ENCODE measurements at regions of chr1 and their contacts with region 1.

Region 1: DNA sequence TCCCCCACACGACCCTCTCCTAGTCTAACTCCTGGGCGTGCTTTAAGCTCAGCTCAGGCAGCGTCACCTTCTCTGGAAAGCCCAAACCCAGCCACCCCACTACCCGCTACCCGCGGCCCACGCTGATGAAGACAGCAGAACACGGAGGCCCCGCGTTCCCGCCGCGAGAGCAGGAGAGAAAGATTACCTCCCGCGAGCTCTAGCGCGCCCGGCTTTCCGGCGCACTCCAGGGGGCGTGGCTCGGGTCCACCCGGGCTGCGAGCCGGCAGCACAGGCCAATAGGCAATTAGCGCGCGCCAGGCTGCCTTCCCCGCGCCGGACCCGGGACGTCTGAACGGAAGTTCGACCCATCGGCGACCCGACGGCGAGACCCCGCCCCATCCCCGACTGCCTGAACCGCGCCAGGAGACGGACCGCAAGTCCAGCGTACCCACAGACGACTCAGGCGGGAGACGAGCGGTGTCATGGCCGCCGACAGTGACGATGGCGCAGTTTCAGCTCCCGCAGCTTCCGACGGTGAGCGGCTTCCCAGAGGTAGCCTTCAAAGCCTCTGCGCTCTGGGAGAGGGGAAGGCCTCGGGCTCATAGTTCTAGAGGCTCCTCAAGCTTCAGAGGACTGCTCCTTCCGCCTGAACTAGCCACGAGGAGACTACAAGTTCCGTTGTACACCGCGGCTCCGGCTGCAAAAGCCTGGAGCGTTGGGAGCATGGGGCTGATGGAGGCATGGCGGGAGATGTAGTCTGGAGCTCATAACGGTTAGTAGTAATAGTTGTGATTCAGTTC is at the starts of genes MUTYH and TOE1:
- DNase-seq: peak; percentile 97
- H3K4me3 Mint-ChIP-seq: peak within 1 kb of the TSS; percentile 98
- H3K27ac Mint-ChIP-seq: peak within 1 kb of the TSS; percentile 99
- H3K4me1 Mint-ChIP-seq: peaks cover 54% of the 10 kb centered on the region
- H3K27me3 Mint-ChIP-seq: no peaks in the 10 kb centered on the region

Region 2: GRCh38 chr1:45303582-45304310 is 36.2 kb before region 1 on chr1:
- CTCF ChIA-PET with region 1: interaction called, 17 read pairs
- DNase-seq: peak; percentile 99
- H3K4me3 Mint-ChIP-seq: peak overlapping the region; percentile 88
- H3K27ac Mint-ChIP-seq: peak overlapping the region; percentile 93
- H3K4me1 Mint-ChIP-seq: peaks cover 47% of the 10 kb centered on the region
- H3K27me3 Mint-ChIP-seq: no peaks in the 10 kb centered on the region

Measured in activated naive CD4-positive, alpha-beta T cell treated with anti-CD3 and anti-CD28 coated beads, Interleukin-2, amount 10 ng/mL, durations not matched to agents 7 days and 5 days (primary cell).